Right ventricle myocardium inferior (tissue), 1 donor: ENCODE measurements at regions of chr1 and their contacts with region 1.

Region 1: DNA sequence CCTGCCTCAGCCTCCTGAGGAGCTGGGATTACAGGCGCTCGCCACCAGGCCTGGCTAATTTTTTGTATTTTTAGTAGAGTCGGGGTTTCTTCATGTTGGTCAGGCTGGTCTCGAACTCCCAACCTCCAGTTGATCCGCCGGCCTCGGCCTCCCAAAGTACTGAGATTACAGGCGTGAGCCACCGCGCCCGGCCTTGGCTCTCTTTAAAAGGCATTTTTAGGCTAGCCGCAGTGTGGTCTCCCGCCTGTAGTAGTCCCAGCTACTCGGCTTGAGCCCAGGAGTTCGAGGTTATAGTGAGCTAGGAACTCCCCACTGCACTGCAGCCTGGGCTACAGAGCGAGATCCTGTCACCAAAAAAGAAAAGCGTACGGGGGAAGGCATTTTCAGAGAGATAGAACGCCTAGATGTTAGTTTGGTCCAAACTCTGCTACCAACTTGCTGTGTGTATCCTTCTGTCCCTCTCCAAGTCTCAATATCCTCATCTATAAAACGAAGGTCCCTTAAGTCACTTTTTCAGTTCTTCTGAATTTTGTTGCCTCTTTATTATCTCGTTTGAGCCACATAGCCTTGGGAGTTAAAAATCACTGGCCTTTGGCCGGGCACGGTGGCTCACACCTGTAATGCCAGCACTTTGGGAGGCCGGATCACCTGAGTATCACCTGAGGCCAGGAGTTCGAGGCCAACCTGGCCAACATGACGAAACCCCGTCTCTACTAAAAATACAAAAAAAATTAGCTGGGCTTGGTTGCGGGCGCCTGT is 734 bp downstream of the MED18 start:
- DNase-seq: no peak
- ATAC-seq: no peak

Region 2: DNA sequence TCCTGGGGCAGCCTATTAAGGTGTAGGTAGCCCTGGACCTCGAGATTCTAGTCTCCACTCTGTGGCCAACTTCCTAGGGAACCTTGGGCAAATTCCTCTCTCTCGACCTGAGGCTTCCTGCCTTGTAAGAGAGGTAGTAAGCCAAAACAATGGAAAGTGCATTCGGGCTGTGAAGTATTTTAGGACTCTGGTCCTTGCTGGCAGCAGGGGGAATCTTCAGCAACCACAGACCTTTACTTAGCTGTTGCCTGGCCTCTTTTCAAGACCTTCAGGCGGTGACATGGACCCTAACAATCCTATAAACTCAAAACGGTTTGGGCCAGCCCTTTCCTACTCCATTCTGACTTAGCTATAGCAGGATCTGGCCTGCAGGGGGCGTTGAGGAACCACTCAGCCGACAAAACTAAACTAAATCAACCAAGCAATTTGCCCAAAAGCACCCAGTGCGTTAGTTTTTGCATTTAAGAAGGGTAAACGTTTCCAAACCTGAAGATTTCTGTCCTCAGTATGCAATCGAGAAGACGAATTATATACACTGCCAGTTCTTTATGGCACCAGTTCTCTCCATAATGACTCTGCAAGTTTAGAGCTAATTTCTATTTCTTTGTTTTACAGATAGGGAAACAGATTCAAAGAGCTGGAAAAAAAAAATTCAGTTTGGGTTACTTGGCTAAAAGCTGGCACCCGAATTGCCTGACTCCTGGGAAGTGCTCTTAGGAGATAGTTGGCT is 81.1 kb before region 1 on chr1:
- intact Hi-C with region 1: loop called (anchors 5 kb)
- DNase-seq: peak; percentile 90
- ATAC-seq: peak; percentile 66

Region 3: GRCh38 chr1:28259307-28260167 is 70.0 kb before region 1 on chr1 and contains the start of gene SESN2:
- intact Hi-C with region 1: loop called (anchors 2 kb)
- DNase-seq: peak; percentile 100
- ATAC-seq: peak; percentile 98
- total RNA-seq, gene SESN2: 2.9 TPM